ENCODE measurements at regions of chr3 and their contacts with region 1.

Region 1: GRCh38 chr3:33113772-33114621 is at the start of gene CRTAP:
- DNase-seq: peak; percentile 90
- H3K4me3 ChIP-seq: peak within 1 kb of the TSS; percentile 94
- H3K4me3 Mint-ChIP-seq: peak within 1 kb of the TSS; percentile 80
- H3K27ac Mint-ChIP-seq: peak within 1 kb of the TSS; percentile 25
- H3K4me1 ChIP-seq: peaks cover 7% of the 10 kb centered on the region; the same call in 1 of the 2 replicates
- H3K4me1 Mint-ChIP-seq: no peaks in the 10 kb centered on the region
- H3K27me3 ChIP-seq: no peaks in the 10 kb centered on the region
- H3K27me3 Mint-ChIP-seq: no peaks in the 10 kb centered on the region
- CTCF ChIP-seq: no peak
- total RNA-seq, gene CRTAP: 144 and 151 TPM in 2 replicates

Region 2: DNA sequence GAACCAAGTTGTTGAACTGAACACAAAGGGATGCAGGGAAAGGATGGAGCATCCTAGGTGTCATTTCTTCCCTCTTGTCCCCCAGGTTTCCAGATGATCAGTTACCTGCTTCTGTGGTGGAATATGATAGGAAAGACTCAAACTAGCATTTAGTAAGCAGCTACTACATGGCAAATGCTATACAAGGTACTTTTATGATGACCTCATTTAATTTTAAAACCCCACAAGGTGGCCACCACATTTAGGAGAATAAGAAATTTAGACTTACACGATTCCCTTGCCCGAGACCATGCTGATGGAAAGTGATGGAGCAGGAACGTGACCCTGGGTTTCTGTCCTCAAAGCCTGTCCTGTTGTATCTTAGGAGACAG is 121.7 kb before region 1 on chr3:
- CTCF ChIA-PET with region 1: no interaction called
- POLR2A ChIA-PET with region 1: no interaction called
- intact Hi-C with region 1: no loop called
- DNase-seq: no peak
- H3K4me3 ChIP-seq: no peak overlapping the region
- H3K4me3 Mint-ChIP-seq: no peak overlapping the region
- H3K27ac Mint-ChIP-seq: no peak overlapping the region
- H3K4me1 ChIP-seq: no peaks in the 10 kb centered on the region
- H3K4me1 Mint-ChIP-seq: no peaks in the 10 kb centered on the region
- H3K27me3 ChIP-seq: no peaks in the 10 kb centered on the region
- H3K27me3 Mint-ChIP-seq: no peaks in the 10 kb centered on the region
- CTCF ChIP-seq: no peak

Region 3: DNA sequence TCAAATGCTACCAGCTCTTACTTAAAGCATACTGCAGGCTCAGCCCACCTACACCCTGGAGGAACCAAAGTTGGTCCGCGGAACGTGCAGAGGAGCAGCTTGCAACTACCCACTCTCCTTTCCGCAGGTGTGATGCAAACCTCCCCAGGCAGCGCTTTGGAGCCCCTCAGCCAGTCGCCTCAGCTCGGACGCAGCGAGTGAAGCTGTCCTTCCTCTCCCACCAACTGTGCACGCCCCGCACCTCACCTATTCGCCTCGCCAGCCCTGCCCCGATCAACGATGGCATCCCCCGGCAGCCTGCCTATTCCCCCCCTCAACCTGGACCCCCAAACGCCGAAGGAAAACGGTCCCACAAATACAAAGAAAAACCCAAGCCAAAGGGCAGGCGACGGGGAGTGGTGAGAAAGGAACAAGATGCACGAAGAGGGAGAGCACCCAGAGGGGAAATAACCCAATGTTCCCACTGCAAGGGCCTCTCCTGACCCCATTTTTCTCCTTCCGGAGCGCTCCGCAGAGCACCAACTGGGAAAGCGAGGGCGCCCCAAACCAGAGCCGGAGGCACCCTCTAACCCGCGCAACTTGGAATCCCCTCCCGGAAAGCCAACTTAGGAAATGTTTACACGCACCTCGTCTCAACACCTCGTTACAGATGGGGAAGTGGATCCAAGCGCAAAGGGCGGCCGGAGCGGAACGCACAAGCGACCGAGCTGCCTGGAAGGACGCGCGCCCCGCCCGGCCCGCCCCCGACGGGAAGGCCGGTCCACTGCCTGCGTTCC is 17.7 kb before region 1 on chr3:
- CTCF ChIA-PET with region 1: no interaction called
- POLR2A ChIA-PET with region 1: no interaction called
- intact Hi-C with region 1: loop called (anchors 1 kb)
- DNase-seq: peak in 1 of 2 experiments; percentile 45
- H3K4me3 ChIP-seq: peak overlapping the region; percentile 98
- H3K4me3 Mint-ChIP-seq: peak overlapping the region; percentile 95
- H3K27ac Mint-ChIP-seq: peak overlapping the region; percentile 84
- H3K4me1 ChIP-seq: peaks cover 17% of the 10 kb centered on the region
- H3K4me1 Mint-ChIP-seq: peaks cover 23% of the 10 kb centered on the region
- H3K27me3 ChIP-seq: no peaks in the 10 kb centered on the region
- H3K27me3 Mint-ChIP-seq: no peaks in the 10 kb centered on the region
- CTCF ChIP-seq: no peak

Region 4: GRCh38 chr3:33171580-33171979 is 57.6 kb after region 1 on chr3:
- CTCF ChIA-PET with region 1: no interaction called
- POLR2A ChIA-PET with region 1: interaction called, 11 read pairs
- intact Hi-C with region 1: no loop called
- DNase-seq: no peak
- H3K4me3 ChIP-seq: no peak overlapping the region
- H3K4me3 Mint-ChIP-seq: no peak overlapping the region
- H3K27ac Mint-ChIP-seq: no peak overlapping the region
- H3K4me1 ChIP-seq: no peaks in the 10 kb centered on the region
- H3K4me1 Mint-ChIP-seq: peaks cover 12% of the 10 kb centered on the region
- H3K27me3 ChIP-seq: no peaks in the 10 kb centered on the region
- H3K27me3 Mint-ChIP-seq: no peaks in the 10 kb centered on the region
- CTCF ChIP-seq: no peak